Heart right ventricle (tissue), 16 donors: ENCODE measurements at regions of chr2 and their contacts with region 1.

Region 1: GRCh38 chr2:220821683-220822082 is 750.4 kb downstream of the EPHA4 start:
- DNase-seq: no peak
- ATAC-seq: no peak
- H3K4me3 ChIP-seq: no peak overlapping the region
- H3K27ac ChIP-seq: no peak overlapping the region
- H3K4me1 ChIP-seq: no peaks in the 10 kb centered on the region
- H3K27me3 ChIP-seq: no peaks in the 10 kb centered on the region
- CTCF ChIP-seq: no peak

Region 2: GRCh38 chr2:220842901-220843665 is 21.4 kb after region 1 on chr2:
- intact Hi-C with region 1: loop called in 1 of 10 experiments (anchors 2 kb)
- DNase-seq: no peak
- ATAC-seq: no peak
- H3K4me3 ChIP-seq: no peak overlapping the region
- H3K27ac ChIP-seq: no peak overlapping the region
- H3K4me1 ChIP-seq: no peaks in the 10 kb centered on the region
- H3K27me3 ChIP-seq: no peaks in the 10 kb centered on the region
- CTCF ChIP-seq: no peak